Caco-2 (cell line): ENCODE measurements at regions of chr21 and their contacts with region 1.

Region 1: GRCh38 chr21:42609811-42610210 is 43.6 kb upstream of the PDE9A start:
- DNase-seq: peak in 1 of 2 experiments; percentile 45
- H3K4me3 ChIP-seq: no peak overlapping the region
- H3K4me3 Mint-ChIP-seq: no peak overlapping the region
- H3K27ac Mint-ChIP-seq: no peak overlapping the region
- H3K4me1 ChIP-seq: peaks cover 32% of the 10 kb centered on the region
- H3K4me1 Mint-ChIP-seq: peaks cover 18% of the 10 kb centered on the region
- H3K27me3 ChIP-seq: no peaks in the 10 kb centered on the region
- H3K27me3 Mint-ChIP-seq: no peaks in the 10 kb centered on the region
- CTCF ChIP-seq: no peak

Region 2: GRCh38 chr21:43619856-43620255 is 1010.0 kb after region 1 on chr21:
- CTCF ChIA-PET with region 1: no interaction called
- POLR2A ChIA-PET with region 1: no interaction called
- intact Hi-C with region 1: loop called (anchors 10 kb)
- DNase-seq: peak in 1 of 2 experiments; percentile 23
- H3K4me3 ChIP-seq: no peak overlapping the region
- H3K4me3 Mint-ChIP-seq: no peak overlapping the region
- H3K27ac Mint-ChIP-seq: no peak overlapping the region
- H3K4me1 ChIP-seq: peaks cover 4% of the 10 kb centered on the region
- H3K4me1 Mint-ChIP-seq: peaks cover 6% of the 10 kb centered on the region
- H3K27me3 ChIP-seq: no peaks in the 10 kb centered on the region
- H3K27me3 Mint-ChIP-seq: no peaks in the 10 kb centered on the region
- CTCF ChIP-seq: no peak